T-cell (primary cell): ENCODE measurements at regions of chr9 and their contacts with region 1.

Region 1: GRCh38 chr9:34437006-34437925 is 21.1 kb downstream of the FAM219A start:
- DNase-seq: peak; percentile 17 to 87 (median 51)
- ATAC-seq: peak; percentile 79 to 89 (median 86)
- H3K4me3 ChIP-seq: no peak overlapping the region
- H3K4me3 Mint-ChIP-seq: no peak overlapping the region
- H3K27ac ChIP-seq: no peak overlapping the region
- H3K27ac Mint-ChIP-seq: no peak overlapping the region
- H3K4me1 ChIP-seq: peaks cover 0 to 8% of the 10 kb centered on the region in 2 experiments
- H3K4me1 Mint-ChIP-seq: peaks cover 12 to 18% (median 14%) of the 10 kb centered on the region in 3 donors
- H3K27me3 ChIP-seq: no peaks in the 10 kb centered on the region
- H3K27me3 Mint-ChIP-seq: no peaks in the 10 kb centered on the region

Region 2: DNA sequence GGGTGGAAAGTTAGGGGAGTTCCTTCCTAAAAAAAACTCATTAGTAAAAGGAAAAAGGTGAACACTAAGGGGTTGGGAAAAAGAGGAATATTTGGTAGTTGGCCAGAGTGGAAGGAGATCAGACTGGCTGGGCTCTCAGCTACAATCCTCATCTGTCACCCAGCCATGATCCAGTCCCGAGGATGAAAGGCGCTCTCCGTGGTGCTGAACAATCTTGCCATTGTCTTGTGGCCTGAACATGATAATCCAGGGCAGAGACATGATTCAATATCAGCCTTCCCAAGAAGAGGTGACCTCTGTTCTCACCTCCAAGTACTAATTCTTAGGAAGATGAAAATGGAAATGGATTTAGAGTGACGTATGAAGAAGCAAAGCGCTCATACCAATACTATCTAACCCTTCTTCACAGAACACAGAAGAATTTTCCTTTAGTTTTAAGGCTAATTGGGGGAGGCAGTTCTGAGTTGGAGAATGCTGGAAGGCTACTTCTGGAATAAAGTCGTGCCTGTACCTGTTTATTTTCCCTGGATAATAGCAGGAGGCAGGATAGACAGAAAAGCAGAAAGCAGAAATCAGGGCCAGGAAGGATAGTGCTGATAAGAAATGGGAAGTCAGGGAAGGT is 23.9 kb before region 1 on chr9:
- CTCF ChIA-PET with region 1: interaction called in 1 of 2 experiments, 14 read pairs
- POLR2A ChIA-PET with region 1: no interaction called
- DNase-seq: peak in 17 of 35 experiments; percentile 7 to 34 (median 12)
- ATAC-seq: no peak
- H3K4me3 ChIP-seq: no peak overlapping the region
- H3K4me3 Mint-ChIP-seq: no peak overlapping the region
- H3K27ac ChIP-seq: no peak overlapping the region
- H3K27ac Mint-ChIP-seq: no peak overlapping the region
- H3K4me1 ChIP-seq: no peaks in the 10 kb centered on the region
- H3K4me1 Mint-ChIP-seq: no peaks in the 10 kb centered on the region
- H3K27me3 ChIP-seq: no peaks in the 10 kb centered on the region
- H3K27me3 Mint-ChIP-seq: no peaks in the 10 kb centered on the region